ENCODE measurements at regions of chr12 and their contacts with region 1.

Region 1: DNA sequence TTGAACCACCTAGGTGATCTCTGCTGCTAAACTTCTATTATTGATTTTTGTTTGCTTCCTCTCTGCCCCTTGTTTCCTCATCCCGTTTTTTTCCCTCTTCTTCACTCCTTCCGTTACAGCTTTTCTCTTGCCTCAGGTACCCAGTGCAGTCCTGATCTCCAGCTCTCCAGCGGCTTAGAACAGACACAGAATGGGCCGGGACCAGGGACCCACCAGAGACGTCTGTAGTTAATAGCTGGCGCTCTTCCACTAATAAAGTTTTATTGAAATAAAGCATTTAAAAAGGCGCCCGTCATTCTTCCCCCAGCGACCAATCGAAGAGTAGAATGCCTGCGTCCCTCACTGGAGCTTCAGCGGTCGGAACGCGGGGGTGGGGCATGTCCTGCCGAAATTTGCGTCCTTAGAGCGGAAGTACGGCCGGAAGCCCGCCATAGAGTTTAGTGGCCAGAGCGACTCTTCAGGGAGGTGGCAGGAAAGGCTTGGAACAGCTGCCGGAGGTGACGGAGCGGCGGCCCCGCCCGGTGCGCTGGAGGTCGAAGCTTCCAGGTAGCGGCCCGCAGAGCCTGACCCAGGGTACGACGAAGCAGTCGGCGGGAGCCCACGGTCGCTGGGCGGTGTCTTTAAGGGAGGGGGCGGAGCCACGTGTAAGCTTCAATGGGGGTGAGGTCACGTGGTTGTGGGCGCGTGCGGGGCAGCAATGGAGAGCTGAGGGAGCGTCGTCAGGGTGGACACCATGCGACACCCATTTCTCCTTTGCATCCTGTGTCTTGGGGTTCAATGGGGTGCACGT is at the start of gene COPS7A:
- DNase-seq: peak; percentile 98
- H3K4me3 Mint-ChIP-seq: peak within 1 kb of the TSS; percentile 92
- H3K27ac Mint-ChIP-seq: peak within 1 kb of the TSS; percentile 91
- H3K4me1 Mint-ChIP-seq: peaks cover 33% of the 10 kb centered on the region
- H3K27me3 Mint-ChIP-seq: no peaks in the 10 kb centered on the region
- total RNA-seq, gene COPS7A: 34.6 and 36.2 TPM in 2 replicates

Region 2: GRCh38 chr12:6533923-6534694 is 189.7 kb before region 1 on chr12 and contains the start of gene GAPDH:
- intact Hi-C with region 1: loop called (anchors 1 kb)
- DNase-seq: peak; percentile 86
- H3K4me3 Mint-ChIP-seq: peak within 1 kb of the TSS; percentile 91
- H3K27ac Mint-ChIP-seq: peak within 1 kb of the TSS; percentile 99
- H3K4me1 Mint-ChIP-seq: peaks cover 58% of the 10 kb centered on the region
- H3K27me3 Mint-ChIP-seq: no peaks in the 10 kb centered on the region
- total RNA-seq, gene GAPDH: 4,315 and 4,318 TPM in 2 replicates

Region 3: DNA sequence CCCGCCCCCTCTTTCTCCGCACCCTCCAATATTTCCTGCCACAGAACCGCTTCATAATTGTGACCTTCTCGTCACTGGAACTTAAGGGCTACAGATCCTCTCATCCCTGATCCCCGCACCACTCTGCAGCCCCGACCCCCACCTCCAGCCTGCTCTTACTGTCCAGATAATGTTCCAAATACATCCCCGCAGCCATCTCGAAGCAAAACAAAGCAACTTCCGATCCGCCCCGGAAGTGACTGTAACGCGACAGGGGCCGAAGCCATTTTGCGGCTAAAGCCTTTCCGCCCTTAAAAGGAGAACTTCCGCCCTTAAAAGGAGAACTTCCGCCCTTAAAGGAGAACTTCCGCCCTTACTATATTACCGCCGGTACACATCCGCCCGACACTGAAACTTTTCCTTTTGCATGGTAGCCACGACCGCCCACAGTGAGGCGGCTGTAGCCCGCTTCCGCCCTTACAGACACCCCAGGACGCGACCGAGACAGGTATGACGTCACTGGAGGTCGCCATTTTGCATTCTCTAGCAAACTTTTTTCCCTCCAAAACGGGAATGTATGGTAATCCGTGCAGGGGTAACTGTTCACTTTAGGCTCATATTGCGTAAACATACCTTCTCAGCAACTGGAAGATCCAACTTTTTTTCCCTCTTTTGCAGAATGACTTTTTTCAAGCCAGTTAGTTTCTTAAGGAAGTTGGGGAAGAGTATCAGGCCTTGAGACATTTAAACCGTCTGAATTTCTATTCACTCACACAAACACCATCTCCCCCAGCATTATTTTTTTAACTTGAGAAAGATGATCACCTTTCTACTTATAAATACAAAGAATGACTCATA is 60.7 kb before region 1 on chr12 and contains the start of gene ING4:
- intact Hi-C with region 1: loop called (anchors 1 kb)
- DNase-seq: peak; percentile 95
- H3K4me3 Mint-ChIP-seq: peak within 1 kb of the TSS; percentile 89
- H3K27ac Mint-ChIP-seq: peak within 1 kb of the TSS; percentile 91
- H3K4me1 Mint-ChIP-seq: peaks cover 30% of the 10 kb centered on the region
- H3K27me3 Mint-ChIP-seq: no peaks in the 10 kb centered on the region
- total RNA-seq, gene ING4: 14.6 and 15.0 TPM in 2 replicates

Region 4: DNA sequence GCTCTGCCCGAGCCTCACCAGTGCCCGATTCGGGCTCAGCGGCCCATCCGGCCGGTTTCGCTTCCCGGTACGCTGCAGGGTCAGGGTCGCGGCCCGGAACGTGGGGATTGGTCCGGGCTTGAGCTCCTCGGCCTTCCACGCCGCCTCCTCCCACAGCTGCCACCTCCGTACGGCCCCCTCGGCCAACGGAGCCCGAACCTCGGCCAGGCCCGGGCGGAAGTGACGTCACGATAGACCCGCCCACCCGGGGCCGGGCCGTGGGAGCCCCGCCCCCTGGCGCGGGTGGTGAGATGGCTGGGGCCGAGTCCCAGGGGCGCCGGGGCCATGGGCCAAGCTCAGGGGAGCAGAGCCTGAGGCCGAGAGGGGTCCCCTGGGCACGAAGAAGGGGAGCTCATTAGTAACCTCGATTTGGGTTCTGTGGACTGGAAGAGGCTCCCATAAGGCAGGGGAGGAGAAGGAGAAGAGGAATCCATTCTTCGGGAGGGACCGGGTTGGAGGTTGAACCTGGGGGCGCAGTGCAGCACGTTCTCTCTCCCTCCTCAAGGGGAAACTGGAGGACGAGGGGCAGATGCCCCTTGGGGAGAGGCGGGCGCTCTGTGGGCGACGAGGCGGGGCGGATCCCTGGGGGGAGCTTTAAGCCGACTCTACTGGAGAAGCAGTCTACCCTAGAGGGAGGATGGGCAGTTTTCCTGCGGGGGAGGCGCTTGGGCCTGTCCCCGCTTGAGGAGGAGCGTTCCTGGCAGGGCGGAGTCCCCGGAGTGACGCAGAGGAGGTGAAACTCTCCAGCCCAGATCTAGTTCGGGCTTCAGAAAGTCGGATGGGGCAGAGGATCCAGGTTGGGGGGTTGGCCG is 29.3 kb after region 1 on chr12 and contains the start of gene MLF2:
- intact Hi-C with region 1: loop called (anchors 1 kb)
- DNase-seq: peak; percentile 97
- H3K4me3 Mint-ChIP-seq: peak within 1 kb of the TSS; percentile 94
- H3K27ac Mint-ChIP-seq: peak within 1 kb of the TSS; percentile 96
- H3K4me1 Mint-ChIP-seq: peaks cover 32% of the 10 kb centered on the region
- H3K27me3 Mint-ChIP-seq: no peaks in the 10 kb centered on the region
- total RNA-seq, gene MLF2: 159 and 161 TPM in 2 replicates

Region 5: GRCh38 chr12:6792522-6793201 is 68.9 kb after region 1 on chr12:
- intact Hi-C with region 1: loop called (anchors 2 kb)
- DNase-seq: peak; percentile 40
- H3K4me3 Mint-ChIP-seq: peak overlapping the region; percentile 94
- H3K27ac Mint-ChIP-seq: peak overlapping the region; percentile 87
- H3K4me1 Mint-ChIP-seq: peaks cover 65% of the 10 kb centered on the region
- H3K27me3 Mint-ChIP-seq: no peaks in the 10 kb centered on the region

Region 6: GRCh38 chr12:6890789-6891645 is 167.2 kb after region 1 on chr12:
- intact Hi-C with region 1: loop called (anchors 1 kb)
- DNase-seq: peak; percentile 98
- H3K4me3 Mint-ChIP-seq: peak overlapping the region; percentile 84
- H3K27ac Mint-ChIP-seq: peak overlapping the region; percentile 95
- H3K4me1 Mint-ChIP-seq: peaks cover 19% of the 10 kb centered on the region
- H3K27me3 Mint-ChIP-seq: no peaks in the 10 kb centered on the region

Measured in activated T-helper 1 cell treated with anti-CD3 and anti-CD28 coated beads, Interleukin-12 subunit alpha, Interleukin-12 subunit beta, Interleukin-2, Interleukin-4 antibody, amounts not matched to agents 30 ng/mL and 10 ng/mL and 1 ng/mL, durations not matched to agents 14 hours and 24 hours and 36 hours (primary cell).